T-cell (primary cell): ENCODE measurements at regions of chr6 and their contacts with region 1.

Region 1: DNA sequence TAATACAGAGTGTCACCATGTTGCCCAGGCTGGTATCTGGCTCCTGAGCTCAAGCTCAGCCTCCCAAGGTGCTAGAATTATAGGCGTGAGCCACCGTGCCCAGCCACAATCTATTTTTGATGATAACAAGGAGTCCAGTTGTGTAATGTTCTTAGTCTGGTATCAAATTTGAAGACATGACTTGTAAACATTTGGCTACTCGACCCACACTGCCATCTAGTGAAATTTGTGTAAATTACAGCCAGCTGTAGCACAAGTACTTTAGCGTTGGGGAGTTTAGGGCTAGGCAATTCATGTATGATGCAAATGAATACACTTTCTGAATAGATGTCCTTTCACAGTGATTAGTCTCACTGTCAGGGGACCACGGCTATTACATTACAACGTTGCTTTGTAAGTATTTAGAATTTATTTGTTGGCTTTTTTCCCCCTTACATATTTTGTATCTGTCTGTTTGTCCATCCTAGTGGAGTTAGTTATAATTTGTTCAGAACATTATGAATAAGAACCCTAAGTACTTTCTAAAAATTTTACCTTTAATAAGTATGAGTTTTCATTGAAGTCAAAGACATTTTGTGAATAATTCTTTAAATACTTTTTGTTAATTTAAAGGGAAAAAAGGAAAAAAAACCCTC is 139.7 kb downstream of the PRDM13 start:
- DNase-seq: peak in 32 of 35 experiments; percentile 2 to 79 (median 34)
- ATAC-seq: peak; percentile 53 to 66 (median 61)
- H3K4me3 ChIP-seq: no peak overlapping the region
- H3K4me3 Mint-ChIP-seq: no peak overlapping the region
- H3K27ac ChIP-seq: no peak overlapping the region
- H3K27ac Mint-ChIP-seq: no peak overlapping the region
- H3K4me1 ChIP-seq: no peaks in the 10 kb centered on the region
- H3K4me1 Mint-ChIP-seq: no peaks in the 10 kb centered on the region
- H3K27me3 ChIP-seq: peaks cover 7 to 13% of the 10 kb centered on the region in 2 experiments
- H3K27me3 Mint-ChIP-seq: peaks cover 28 to 35% of the 10 kb centered on the region in 2 donors

Region 2: GRCh38 chr6:99467509-99468106 is 278.8 kb before region 1 on chr6:
- CTCF ChIA-PET with region 1: interaction called, 18 to 34 read pairs
- POLR2A ChIA-PET with region 1: no interaction called
- DNase-seq: peak in 1 of 35 experiments; percentile 57
- ATAC-seq: no peak
- H3K4me3 ChIP-seq: no peak overlapping the region
- H3K4me3 Mint-ChIP-seq: no peak overlapping the region
- H3K27ac ChIP-seq: no peak overlapping the region
- H3K27ac Mint-ChIP-seq: no peak overlapping the region
- H3K4me1 ChIP-seq: no peaks in the 10 kb centered on the region
- H3K4me1 Mint-ChIP-seq: no peaks in the 10 kb centered on the region
- H3K27me3 ChIP-seq: no peaks in the 10 kb centered on the region
- H3K27me3 Mint-ChIP-seq: no peaks in the 10 kb centered on the region

Region 3: DNA sequence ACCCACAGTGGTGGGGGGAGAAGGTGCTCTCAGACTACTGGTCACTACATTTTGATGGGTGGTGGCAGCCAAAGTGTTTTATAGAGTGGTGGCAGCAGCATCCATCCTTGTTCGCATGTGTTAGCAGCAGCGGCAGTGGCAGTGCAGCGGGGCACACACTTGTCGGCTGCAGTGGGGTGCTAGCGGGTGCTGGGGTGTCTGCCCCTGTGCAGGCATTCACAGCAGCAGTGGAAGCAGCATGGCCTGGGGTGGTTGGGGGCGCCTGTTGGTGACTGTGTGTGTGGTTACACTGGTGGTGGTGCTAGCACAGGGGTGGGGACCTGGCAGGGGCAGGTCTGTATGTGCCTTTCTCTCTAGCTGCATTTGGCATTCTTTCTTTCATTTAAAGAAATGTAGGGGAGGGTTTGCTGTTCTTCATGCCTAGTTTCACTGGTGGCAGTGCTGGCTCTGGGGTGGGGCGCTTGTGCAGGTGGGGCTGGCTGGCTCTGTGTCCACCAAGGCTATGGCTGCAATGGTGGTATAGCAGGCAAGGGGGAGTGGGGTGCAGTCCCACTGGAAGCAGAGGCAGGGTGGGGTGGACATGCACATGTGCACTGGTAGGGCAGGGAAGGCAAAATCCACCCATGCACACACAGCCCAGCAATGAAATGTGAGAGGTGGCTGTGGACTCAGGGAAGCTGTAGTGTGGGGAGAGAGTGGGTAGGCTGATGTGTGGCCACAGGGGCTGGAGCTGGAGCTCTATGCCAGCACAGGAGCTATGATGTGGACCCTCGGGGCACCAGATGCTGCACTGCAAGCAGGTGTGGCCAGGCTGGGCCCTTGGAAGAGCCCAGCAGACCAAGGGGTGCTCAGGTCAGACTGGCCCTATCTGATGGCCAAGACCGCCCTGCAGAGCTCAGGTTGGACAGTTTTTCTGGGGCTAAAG is 33.5 kb after region 1 on chr6:
- CTCF ChIA-PET with region 1: no interaction called
- POLR2A ChIA-PET with region 1: no interaction called
- DNase-seq: no peak
- ATAC-seq: no peak
- H3K4me3 ChIP-seq: no peak overlapping the region
- H3K4me3 Mint-ChIP-seq: no peak overlapping the region
- H3K27ac ChIP-seq: no peak overlapping the region
- H3K27ac Mint-ChIP-seq: no peak overlapping the region
- H3K4me1 ChIP-seq: no peaks in the 10 kb centered on the region
- H3K4me1 Mint-ChIP-seq: no peaks in the 10 kb centered on the region
- H3K27me3 ChIP-seq: peaks cover 0 to 14% of the 10 kb centered on the region in 2 experiments
- H3K27me3 Mint-ChIP-seq: peaks cover 55 to 60% of the 10 kb centered on the region in 2 donors

Region 4: GRCh38 chr6:99980741-99981140 is 234.4 kb after region 1 on chr6:
- CTCF ChIA-PET with region 1: no interaction called
- POLR2A ChIA-PET with region 1: no interaction called
- DNase-seq: no peak
- ATAC-seq: no peak
- H3K4me3 ChIP-seq: no peak overlapping the region
- H3K4me3 Mint-ChIP-seq: no peak overlapping the region
- H3K27ac ChIP-seq: no peak overlapping the region
- H3K27ac Mint-ChIP-seq: no peak overlapping the region
- H3K4me1 ChIP-seq: no peaks in the 10 kb centered on the region
- H3K4me1 Mint-ChIP-seq: no peaks in the 10 kb centered on the region
- H3K27me3 ChIP-seq: peaks cover 0 to 4% of the 10 kb centered on the region in 2 experiments
- H3K27me3 Mint-ChIP-seq: peaks cover under 1 to 16% of the 10 kb centered on the region in 2 donors